ENCODE measurements at regions of chr11 and their contacts with region 1.

Region 1: DNA sequence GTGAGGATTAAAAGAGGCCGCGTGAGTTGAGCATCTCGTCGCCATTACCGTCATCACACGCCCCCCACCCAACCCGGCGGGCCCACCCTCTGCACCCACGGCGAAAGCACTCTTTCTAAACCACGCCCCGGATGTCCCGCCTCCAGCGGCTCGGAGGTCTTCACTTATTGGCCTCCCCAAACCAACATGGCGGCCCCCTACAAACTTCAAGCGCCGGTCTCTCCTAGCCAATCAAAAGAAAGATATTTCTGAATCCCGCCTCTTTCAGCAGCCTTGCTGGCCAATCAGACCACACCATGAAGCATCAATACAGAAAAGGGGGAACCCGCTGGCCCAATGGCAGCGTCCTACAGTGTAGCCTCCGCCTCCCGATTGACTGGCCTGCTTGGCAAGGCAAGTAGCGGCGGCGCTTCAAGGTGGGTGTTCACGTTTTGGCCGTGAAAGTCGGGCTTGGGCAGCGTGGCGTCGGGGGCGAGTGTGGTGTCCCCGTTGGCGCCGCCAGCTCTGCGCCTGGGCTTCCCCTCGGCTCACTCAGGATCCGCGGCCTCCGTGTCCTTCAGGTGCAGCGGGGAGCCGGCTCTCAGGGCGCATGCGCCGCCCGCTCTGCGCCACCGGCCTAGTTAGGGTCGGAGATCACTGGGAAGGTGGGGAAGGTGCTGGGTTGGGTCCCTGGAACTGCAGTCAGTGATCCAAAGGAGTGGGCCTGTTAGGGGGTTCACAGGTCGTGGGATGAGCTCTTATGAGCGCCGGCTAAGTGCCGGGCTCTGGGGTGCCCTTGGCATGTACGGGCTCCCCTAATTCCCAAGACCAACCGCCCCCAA is at the start of gene NDUFS8:
- DNase-seq: peak; percentile 96
- H3K4me3 Mint-ChIP-seq: peak within 1 kb of the TSS; percentile 92
- H3K27ac Mint-ChIP-seq: peak within 1 kb of the TSS; percentile 82
- H3K4me1 Mint-ChIP-seq: peaks cover 20% of the 10 kb centered on the region
- H3K27me3 Mint-ChIP-seq: peaks cover 1% of the 10 kb centered on the region
- total RNA-seq, gene NDUFS8: 137 and 144 TPM in 2 replicates

Region 2: DNA sequence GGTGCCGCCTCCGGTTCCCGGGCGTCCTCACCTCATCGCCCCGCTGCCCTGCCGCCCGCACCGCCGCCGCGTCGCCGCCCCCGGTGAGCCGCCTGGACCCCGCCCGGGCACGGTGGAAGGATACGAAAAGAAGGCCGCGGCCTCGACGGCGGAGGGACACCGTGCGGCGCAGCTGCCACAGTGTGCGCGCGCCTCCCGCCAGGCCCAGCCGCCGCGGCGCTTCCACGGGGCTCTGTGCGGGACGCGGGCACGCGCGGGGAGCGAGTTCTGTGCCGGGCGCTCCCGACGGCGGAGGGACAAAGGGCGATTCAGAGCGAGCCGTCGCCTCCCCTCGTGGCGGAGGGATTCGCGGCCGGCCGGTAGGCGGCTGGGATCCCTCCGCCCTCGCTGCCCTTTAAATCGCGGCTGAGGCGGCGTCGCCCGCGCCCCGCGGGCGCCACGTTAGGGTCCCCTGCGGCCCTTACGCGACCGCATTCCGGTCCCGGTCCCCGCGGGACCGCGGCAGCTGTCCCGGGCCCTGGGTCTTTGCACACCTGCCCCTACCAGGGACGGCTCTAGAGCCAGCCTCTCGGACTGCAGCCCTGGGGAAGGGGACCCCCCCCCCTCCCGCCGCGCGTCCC is 183.1 kb after region 1 on chr11:
- intact Hi-C with region 1: loop called (anchors 1 kb)
- DNase-seq: peak; percentile 76
- H3K4me3 Mint-ChIP-seq: peak overlapping the region; percentile 64
- H3K27ac Mint-ChIP-seq: no peak overlapping the region
- H3K4me1 Mint-ChIP-seq: peaks cover 44% of the 10 kb centered on the region
- H3K27me3 Mint-ChIP-seq: peaks cover 20% of the 10 kb centered on the region

Measured in activated T-helper 1 cell treated with anti-CD3 and anti-CD28 coated beads, Interleukin-12 subunit alpha, Interleukin-12 subunit beta, Interleukin-2, Interleukin-4 antibody, amounts not matched to agents 30 ng/mL and 10 ng/mL and 1 ng/mL, durations not matched to agents 14 hours and 24 hours and 36 hours (primary cell).